Cardiac septum (tissue), 1 donor: ENCODE measurements at regions of chr19 and their contacts with region 1.

Region 1: DNA sequence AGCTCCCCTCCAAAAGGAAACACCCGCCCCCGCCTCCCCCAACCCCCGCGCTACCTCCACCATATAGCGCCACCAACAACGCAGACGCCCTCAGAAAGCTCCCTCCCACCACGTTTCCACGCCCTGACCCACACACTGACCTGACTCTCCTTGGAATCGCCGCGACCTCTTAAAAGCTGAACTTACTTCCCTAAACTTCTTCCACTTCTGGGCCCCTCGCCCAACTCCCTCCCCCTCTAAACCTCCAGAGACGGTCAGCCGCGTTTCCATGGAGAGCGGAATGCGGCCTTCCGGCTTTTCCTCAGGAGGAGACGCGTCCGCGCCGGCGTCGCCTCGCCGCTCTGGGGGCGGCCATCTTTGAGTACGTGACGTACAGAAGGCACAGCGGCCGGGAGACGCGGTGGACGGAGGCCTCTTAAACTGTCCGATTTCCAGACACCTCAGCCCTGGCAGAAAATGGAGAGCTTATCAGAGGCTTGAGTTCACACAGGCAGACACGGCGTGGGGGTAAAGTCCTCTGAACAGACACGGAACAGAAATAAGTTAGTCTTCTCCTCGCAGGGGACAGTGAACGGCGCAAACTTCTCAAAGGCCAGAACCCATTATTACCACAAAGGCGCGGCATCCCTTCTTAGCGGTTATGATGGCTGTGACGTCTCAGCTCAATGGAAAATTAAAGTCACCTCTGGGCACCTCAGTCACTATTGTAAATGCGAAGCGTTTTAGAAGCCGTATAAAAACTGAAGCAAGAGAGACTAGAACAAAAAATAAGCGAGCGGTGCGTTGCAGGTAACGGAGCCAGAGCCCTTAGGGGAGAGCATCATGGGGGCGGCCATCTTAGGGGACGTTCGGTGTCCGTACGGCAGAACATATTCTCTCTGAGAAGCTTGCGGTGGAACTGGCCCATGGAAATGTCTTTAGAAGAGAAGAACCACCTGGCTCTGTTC is at the start of gene ZNF432:
- DNase-seq: peak; percentile 97
- total RNA-seq, gene ZNF432: 9.6 TPM

Region 2: DNA sequence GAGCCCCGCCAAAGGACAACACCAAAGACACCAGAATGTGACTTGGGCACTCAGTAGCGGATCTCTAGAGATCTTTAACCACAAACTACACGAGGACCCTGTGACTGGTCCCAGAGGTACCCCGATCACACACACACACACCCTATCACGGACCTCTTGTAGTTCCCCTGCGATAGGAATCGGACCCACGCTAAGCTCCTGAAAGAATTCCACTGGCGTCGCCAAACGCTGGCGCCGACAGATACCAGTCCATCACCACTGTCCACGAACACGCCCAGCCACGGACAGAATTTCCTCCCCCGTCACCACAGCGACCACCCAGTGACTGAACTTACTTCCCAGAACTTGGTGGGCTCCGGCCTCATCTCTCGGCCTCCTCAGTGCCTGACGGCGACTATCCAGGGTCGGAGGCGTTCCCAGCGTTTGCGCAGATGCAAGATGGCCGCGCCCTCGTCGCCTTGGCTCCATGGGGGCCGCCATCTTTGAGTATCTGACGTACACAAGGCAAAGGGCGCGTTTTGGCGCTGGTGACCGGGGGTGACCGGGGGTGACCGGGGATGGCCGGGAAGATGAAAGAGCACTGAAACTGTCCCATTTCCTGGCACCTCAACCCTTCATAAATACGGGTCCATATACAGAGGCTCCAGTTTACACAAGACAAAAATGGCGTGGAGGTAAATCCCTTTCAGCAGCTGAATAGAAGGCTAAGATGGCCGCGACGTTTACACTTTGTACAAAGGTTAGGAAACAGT is 40.8 kb before region 1 on chr19 and contains the start of gene ZNF615:
- intact Hi-C with region 1: loop called (anchors 5 kb)
- DNase-seq: peak; percentile 97
- total RNA-seq, gene ZNF615: 11.8 TPM

Region 3: GRCh38 chr19:52028027-52028779 is 20.6 kb before region 1 on chr19 and contains the start of gene ZNF614:
- intact Hi-C with region 1: loop called (anchors 1 kb)
- DNase-seq: peak; percentile 94
- total RNA-seq, gene ZNF614: 6.4 TPM

Region 4: DNA sequence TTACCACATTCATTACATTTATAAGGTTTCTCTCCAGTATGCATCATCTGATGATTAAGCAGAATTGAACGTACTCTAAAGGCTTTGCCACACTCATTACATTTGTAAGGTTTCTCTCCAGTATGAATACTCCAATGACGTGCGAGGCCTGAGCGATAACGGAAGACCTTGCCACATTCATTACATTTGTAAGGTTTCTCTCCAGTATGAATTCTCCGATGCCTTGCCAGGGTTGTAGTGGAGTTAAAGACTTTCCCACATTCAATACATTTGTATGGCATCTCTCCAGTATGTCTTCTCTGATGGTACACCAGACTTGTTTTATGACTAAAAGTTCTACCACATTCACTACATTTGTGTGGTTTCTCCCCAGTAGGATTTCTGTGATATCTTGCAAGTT is 16.6 kb after region 1 on chr19:
- intact Hi-C with region 1: no loop called
- DNase-seq: no peak